CD8-positive, alpha-beta T cell (primary cell): ENCODE measurements at regions of chr15 and their contacts with region 1.

Region 1: DNA sequence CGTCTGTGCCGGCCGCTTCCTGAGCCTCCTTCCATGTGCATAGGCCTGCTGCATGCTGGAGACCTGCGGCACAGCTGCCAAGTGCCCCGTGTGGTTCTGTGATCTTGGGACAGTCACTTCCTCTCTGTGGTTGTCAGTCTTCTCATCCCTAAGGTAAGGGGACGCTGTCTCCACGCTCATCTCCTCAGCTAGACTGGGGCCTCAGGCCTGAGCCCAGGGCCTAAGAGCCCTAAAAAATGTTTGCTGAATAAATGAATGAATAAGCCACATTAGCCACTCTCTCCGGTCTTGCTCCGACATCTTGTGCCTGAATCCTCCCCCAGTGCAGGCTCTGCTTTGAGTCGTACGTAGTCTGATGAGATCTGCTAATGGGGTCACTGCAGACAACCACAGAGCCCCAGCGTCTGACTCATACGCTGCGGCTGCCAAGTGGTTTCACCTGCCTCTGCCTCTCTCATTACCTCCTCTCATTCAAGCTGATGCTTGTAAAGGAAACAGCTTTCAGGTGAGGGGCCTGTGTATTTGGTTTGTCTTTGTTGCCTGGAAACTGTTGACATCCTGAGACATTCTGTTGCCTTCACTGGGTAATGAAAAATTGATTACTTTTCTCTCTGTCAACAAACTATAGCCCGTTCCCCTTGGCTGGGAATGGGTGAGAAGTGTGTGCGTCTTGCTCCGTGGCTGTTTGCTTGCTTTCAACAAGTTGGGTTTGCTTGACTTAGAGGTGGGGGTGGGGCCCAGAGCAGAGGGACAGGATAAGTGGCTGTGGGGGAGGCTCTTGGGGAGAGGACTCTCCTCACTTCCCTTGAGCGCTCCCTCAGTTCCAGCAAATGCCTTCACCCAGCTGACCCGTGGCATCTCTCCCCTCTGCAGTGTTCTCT is 15.9 kb downstream of the RPLP1 start:
- DNase-seq: peak; percentile 72 to 97 (median 84)
- ATAC-seq: peak; percentile 88
- H3K4me3 ChIP-seq: peak overlapping the region in 1 of 2 experiments; percentile 14
- H3K4me3 Mint-ChIP-seq: peak overlapping the region; percentile 60
- H3K27ac ChIP-seq: peak overlapping the region; percentile 76 to 80
- H3K27ac Mint-ChIP-seq: peak overlapping the region; percentile 98
- H3K4me1 ChIP-seq: peaks cover 27% of the 10 kb centered on the region
- H3K4me1 Mint-ChIP-seq: peaks cover 23% of the 10 kb centered on the region
- H3K27me3 ChIP-seq: no peaks in the 10 kb centered on the region
- H3K27me3 Mint-ChIP-seq: no peaks in the 10 kb centered on the region
- CTCF ChIP-seq: no peak

Region 2: GRCh38 chr15:69413822-69414700 is 54.4 kb before region 1 on chr15 and contains the start of gene KIF23:
- CTCF ChIA-PET with region 1: no interaction called
- POLR2A ChIA-PET with region 1: no interaction called
- intact Hi-C with region 1: loop called in 1 of 2 experiments (anchors 1 kb)
- DNase-seq: peak; percentile 81 to 97 (median 94)
- ATAC-seq: peak; percentile 98
- H3K4me3 ChIP-seq: peak within 1 kb of the TSS; percentile 72 to 75
- H3K4me3 Mint-ChIP-seq: peak within 1 kb of the TSS; percentile 88
- H3K27ac ChIP-seq: no peak within 1 kb of the TSS
- H3K27ac Mint-ChIP-seq: no peak within 1 kb of the TSS
- H3K4me1 ChIP-seq: peaks cover 7% of the 10 kb centered on the region
- H3K4me1 Mint-ChIP-seq: peaks cover 15% of the 10 kb centered on the region
- H3K27me3 ChIP-seq: peaks cover 2 to 5% of the 10 kb centered on the region in 2 experiments
- H3K27me3 Mint-ChIP-seq: peaks cover 21% of the 10 kb centered on the region
- CTCF ChIP-seq: no peak
- total RNA-seq, gene KIF23: 0.81 to 0.95 TPM

Region 3: DNA sequence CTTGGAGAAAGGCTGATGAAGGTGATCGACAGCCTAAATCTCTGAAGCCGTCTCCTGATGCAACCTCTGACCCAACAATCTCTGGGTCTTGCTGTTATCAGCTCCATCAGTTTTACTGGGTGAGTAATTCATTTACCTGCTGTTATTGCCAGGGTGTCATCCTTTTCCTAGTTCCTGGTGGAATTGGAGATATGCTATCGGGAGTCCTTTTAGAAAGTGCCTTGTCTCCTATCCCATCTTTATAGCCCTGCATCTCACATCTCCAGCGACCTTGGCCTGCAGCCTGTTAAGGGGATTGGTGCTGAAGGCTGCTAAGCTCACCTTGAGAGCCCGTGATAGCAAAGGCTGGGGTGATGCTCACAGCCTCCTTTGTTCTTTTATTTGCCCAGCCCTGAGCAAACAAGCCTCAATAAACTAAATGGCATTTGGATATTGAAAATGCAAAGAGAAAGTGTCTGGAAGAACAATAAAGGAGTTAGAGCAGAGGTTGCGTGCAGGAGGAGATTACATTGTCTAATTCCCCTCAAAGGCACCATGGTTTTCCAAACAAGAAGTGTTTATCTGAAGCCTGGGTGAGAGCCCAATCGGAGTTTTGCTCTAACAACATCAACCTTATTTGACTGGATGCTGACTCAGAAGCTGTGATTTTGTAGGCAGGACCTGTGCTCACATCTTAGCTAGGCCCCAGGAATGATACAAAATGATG is 85.9 kb after region 1 on chr15:
- CTCF ChIA-PET with region 1: no interaction called
- POLR2A ChIA-PET with region 1: no interaction called
- intact Hi-C with region 1: no loop called
- DNase-seq: no peak
- ATAC-seq: no peak
- H3K4me3 ChIP-seq: no peak overlapping the region
- H3K4me3 Mint-ChIP-seq: no peak overlapping the region
- H3K27ac ChIP-seq: no peak overlapping the region
- H3K27ac Mint-ChIP-seq: no peak overlapping the region
- H3K4me1 ChIP-seq: no peaks in the 10 kb centered on the region
- H3K4me1 Mint-ChIP-seq: no peaks in the 10 kb centered on the region
- H3K27me3 ChIP-seq: no peaks in the 10 kb centered on the region
- H3K27me3 Mint-ChIP-seq: peaks cover 6% of the 10 kb centered on the region
- CTCF ChIP-seq: no peak

Region 4: GRCh38 chr15:69719527-69720240 is 251.2 kb after region 1 on chr15:
- CTCF ChIA-PET with region 1: no interaction called
- POLR2A ChIA-PET with region 1: no interaction called
- intact Hi-C with region 1: loop called (anchors 2 to 5 kb)
- DNase-seq: peak; percentile 50 to 94 (median 72)
- ATAC-seq: peak; percentile 82
- H3K4me3 ChIP-seq: no peak overlapping the region
- H3K4me3 Mint-ChIP-seq: peak overlapping the region; percentile 36
- H3K27ac ChIP-seq: peak overlapping the region; percentile 50 to 78
- H3K27ac Mint-ChIP-seq: peak overlapping the region; percentile 87
- H3K4me1 ChIP-seq: peaks cover 75% of the 10 kb centered on the region
- H3K4me1 Mint-ChIP-seq: peaks cover 91% of the 10 kb centered on the region
- H3K27me3 ChIP-seq: no peaks in the 10 kb centered on the region
- H3K27me3 Mint-ChIP-seq: no peaks in the 10 kb centered on the region
- CTCF ChIP-seq: no peak

Region 5: DNA sequence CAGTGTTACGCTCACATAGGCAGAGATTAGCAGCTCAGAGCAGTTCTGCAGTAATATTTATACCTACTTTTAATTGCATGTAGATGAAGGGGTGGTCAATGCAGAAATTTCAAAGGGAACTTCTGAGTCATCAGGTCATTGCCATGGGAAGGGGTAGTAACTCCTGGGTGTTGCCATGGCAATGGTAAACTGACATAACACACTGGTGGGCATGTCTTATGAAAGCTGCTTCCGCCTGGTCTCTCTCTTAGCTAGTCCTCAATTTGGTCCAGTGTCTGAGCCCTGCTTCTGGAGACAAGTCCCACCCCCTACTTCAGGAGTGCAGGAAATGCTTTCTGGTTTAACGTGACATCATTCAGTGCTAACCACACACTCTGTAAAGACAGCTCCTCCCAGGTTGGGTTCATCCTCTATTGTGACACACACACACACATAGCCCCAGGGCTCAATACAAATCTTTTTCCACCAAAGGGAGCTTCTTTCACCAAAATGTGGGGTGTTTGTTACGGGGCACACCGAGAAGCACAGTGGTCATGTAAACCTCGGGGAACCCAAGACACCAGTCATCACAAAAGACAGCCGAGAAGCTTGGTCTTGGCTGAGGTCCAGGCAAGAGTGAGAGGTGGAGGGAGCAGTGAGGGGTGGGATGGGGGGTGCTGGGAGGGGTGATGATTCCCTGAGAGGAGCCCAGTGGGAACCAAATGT is 554.7 kb after region 1 on chr15:
- CTCF ChIA-PET with region 1: no interaction called
- POLR2A ChIA-PET with region 1: no interaction called
- intact Hi-C with region 1: loop called in 1 of 2 experiments (anchors 5 kb)
- DNase-seq: peak; percentile 24 to 94 (median 55)
- ATAC-seq: peak; percentile 98
- H3K4me3 ChIP-seq: no peak overlapping the region
- H3K4me3 Mint-ChIP-seq: peak overlapping the region; percentile 48
- H3K27ac ChIP-seq: peak overlapping the region in 1 of 2 experiments; percentile 43
- H3K27ac Mint-ChIP-seq: peak overlapping the region; percentile 84
- H3K4me1 ChIP-seq: peaks cover 13% of the 10 kb centered on the region
- H3K4me1 Mint-ChIP-seq: peaks cover 19% of the 10 kb centered on the region
- H3K27me3 ChIP-seq: no peaks in the 10 kb centered on the region
- H3K27me3 Mint-ChIP-seq: peaks cover 5% of the 10 kb centered on the region
- CTCF ChIP-seq: no peak